ENCODE measurements at regions of chrX and their contacts with region 1.

Region 1: DNA sequence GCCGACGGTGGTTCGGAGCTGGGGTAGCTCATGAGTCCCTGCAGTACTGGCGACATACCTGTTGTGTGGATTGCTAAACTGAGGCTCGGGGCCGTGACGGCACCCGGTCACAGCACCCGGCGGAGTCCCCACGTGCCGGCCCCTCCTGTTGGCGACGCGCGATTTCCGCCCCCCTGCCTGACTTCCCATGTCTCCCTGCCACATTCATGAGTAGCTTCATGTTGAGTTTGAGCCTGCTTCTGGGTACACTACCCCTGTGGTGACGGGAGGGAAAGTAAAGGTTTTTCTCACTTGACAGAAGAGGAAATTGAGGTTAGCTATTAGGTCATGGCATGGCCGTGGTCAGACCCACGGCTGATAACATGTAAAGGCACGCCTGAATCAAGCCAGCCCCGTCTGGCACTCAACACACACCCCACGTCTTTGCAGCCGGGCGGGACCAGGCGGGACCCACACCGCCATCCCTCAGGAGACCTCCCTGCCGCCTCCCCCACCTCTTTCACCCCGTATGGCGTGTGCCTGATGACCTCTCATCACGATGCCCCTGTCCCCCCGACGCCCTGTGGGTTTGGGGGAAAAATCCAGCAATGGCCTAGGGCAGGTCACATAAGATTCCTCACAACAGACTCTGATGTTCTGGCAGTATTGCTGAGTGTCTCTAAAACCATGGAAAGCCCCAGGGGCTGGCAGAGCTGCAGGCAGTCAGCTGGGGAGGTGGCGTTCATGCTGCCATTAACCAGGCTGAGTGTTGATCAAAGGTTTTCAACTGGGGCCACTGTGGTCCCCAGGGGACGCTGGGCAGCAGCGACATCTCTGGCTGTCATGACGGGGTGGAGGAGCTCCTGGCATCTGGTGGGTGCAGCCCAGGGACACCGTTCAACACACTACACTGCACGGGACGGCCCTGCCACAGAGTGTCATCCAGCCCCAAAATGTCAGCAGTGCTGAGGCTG is 29.2 kb downstream of the P2RY8 start:
- DNase-seq: peak; percentile 82 to 86 (median 83)
- H3K4me3 ChIP-seq: peak overlapping the region in 1 of 3 experiments; percentile 36
- H3K4me3 Mint-ChIP-seq: peak overlapping the region; percentile 40 to 47
- H3K27ac ChIP-seq: peak overlapping the region; percentile 21 to 80
- H3K27ac Mint-ChIP-seq: peak overlapping the region in 4 of 7 donors; percentile 83 to 97 (median 84)
- H3K4me1 ChIP-seq: peaks cover 55% of the 10 kb centered on the region in 2 donors
- H3K4me1 Mint-ChIP-seq: peaks cover 19% of the 10 kb centered on the region
- H3K27me3 ChIP-seq: no peaks in the 10 kb centered on the region
- H3K27me3 Mint-ChIP-seq: peaks cover 0 to 2% (median 0%) of the 10 kb centered on the region in 3 donors
- CTCF ChIP-seq: no peak

Region 2: DNA sequence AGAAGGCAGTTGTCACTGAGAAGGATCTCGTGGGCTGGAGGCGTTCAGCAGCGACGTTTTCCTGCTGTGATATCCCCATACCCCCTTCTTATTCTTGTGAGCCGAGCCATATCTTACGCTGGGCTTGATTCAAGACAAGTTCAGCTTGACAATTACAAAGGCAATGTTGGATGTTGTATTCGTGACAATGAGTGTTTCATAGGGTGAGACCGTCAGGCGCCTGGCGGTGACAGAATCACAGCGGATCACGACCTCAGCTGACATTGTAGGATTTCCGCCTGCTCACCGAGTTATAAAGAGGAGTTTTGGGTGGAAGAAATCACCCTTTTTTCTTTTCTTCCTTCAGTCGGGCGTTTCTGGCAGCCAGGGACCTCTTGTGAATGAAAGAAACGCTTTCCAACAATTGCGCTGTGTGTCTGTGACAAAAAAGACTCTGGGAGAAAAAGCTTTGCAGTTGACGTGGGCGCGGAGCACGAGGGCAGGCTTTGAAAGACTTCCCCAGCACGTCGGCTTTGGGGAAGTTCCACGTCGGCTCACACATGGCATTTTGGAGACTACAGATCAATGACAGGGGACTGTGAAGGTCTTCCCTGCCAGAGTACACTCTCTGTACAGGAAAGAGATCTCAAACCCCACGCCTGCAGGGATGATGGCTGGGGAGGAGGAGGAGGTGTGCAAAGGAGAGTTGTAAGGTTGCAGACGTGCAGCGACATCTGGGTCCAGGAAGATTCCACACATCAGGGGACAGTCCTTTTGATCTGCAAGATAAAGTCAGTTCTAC is 430.7 kb before region 1 on chrX:
- intact Hi-C with region 1: no loop called
- DNase-seq: no peak
- H3K4me3 ChIP-seq: no peak overlapping the region
- H3K4me3 Mint-ChIP-seq: peak overlapping the region in 1 of 2 donors; percentile 43
- H3K27ac ChIP-seq: no peak overlapping the region
- H3K27ac Mint-ChIP-seq: peak overlapping the region in 2 of 7 donors; percentile 1 to 26
- H3K4me1 ChIP-seq: no peaks in the 10 kb centered on the region
- H3K4me1 Mint-ChIP-seq: peaks cover 5% of the 10 kb centered on the region
- H3K27me3 ChIP-seq: no peaks in the 10 kb centered on the region
- H3K27me3 Mint-ChIP-seq: peaks cover 23 to 25% (median 24%) of the 10 kb centered on the region in 3 donors
- CTCF ChIP-seq: no peak

Region 3: GRCh38 chrX:1521459-1521956 is 13.7 kb after region 1 on chrX:
- intact Hi-C with region 1: loop called in 1 of 2 experiments (anchors 2 kb)
- DNase-seq: peak; percentile 84 to 94 (median 88)
- H3K4me3 ChIP-seq: peak overlapping the region; percentile 16 to 68 (median 21)
- H3K4me3 Mint-ChIP-seq: peak overlapping the region; percentile 72 to 78
- H3K27ac ChIP-seq: peak overlapping the region; percentile 74 to 91
- H3K27ac Mint-ChIP-seq: peak overlapping the region; percentile 87 to 95 (median 94)
- H3K4me1 ChIP-seq: peaks cover 44 to 47% of the 10 kb centered on the region in 2 donors
- H3K4me1 Mint-ChIP-seq: peaks cover 53% of the 10 kb centered on the region
- H3K27me3 ChIP-seq: no peaks in the 10 kb centered on the region
- H3K27me3 Mint-ChIP-seq: peaks cover 0 to 2% (median 0%) of the 10 kb centered on the region in 3 donors
- CTCF ChIP-seq: no peak

Region 4: DNA sequence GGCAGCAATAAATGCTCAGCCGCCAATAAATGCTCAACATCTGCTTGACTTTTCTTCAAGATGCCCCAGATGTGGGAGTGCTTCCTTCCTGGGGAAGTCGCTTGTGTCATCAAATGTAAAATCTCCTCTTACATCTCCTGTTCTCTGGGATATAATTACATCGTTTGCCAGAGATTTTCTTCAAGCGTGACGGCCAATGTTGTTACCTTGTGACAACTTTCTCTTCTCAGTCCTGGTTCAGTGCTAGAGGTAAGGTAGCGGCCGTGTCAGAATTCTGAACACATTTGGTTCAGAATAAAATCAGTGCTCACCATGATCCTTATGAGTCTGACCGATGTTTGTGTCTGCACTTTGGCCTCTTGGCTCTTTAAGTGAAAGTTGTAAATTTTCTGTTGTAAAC is 209.6 kb after region 1 on chrX:
- intact Hi-C with region 1: no loop called
- DNase-seq: no peak
- H3K4me3 ChIP-seq: no peak overlapping the region
- H3K4me3 Mint-ChIP-seq: no peak overlapping the region
- H3K27ac ChIP-seq: no peak overlapping the region
- H3K27ac Mint-ChIP-seq: no peak overlapping the region
- H3K4me1 ChIP-seq: no peaks in the 10 kb centered on the region
- H3K4me1 Mint-ChIP-seq: no peaks in the 10 kb centered on the region
- H3K27me3 ChIP-seq: no peaks in the 10 kb centered on the region
- H3K27me3 Mint-ChIP-seq: peaks cover 3 to 6% (median 4%) of the 10 kb centered on the region in 3 donors
- CTCF ChIP-seq: no peak